ENCODE measurements at regions of chr10 and their contacts with region 1.

Region 1: DNA sequence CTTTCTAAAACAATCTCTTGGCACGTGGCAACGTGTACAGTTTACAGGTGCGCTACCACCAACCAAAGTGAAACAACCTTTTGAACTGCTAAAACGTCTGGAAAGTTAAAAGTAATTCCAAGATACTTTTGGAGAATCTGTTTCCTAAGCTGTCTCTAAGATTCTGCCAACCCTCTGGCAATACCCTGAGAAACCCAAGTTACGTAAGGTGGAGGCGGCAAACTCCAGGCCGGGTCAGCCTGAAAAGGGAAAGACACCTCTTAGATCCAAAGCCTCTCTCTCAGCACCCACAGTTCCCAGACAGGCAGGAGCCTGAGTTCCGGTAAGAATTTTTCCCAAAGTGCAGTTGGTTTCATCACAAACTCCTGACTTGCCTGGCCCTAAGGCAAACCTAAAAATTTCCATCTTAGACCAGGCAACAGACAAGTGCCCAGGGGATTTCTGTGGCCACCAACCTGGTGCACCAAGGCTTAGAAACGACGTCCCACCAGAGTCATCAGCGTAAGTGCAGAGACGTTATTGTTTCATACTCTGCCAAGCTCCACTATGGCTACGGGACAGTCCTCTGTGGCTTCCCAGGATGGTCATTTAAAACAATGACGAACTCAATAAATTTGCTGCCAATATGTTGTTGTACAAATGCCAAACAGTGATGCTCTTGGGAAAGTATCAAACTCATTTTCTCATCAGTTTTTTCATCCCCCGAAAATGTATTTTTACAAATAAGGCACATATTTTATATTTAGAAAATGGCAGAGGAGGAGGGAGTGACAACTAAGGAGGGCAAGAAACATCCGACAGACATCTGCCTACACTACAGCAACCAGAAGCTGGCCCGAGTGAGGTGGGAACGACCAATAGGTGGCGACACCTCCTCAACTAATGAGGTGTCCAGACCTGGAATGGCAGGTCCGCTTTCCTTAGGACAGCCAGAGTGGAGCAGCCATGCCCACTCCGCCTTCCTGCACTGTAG is 205.8 kb upstream of the FRMD4A start:
- DNase-seq: peak; percentile 56
- ATAC-seq: peak; percentile 71
- H3K4me3 ChIP-seq: no peak overlapping the region
- H3K27ac ChIP-seq: peak overlapping the region; percentile 24
- H3K4me1 ChIP-seq: peaks cover 59% of the 10 kb centered on the region
- H3K27me3 ChIP-seq: no peaks in the 10 kb centered on the region
- CTCF ChIP-seq: peak; percentile 87
- EP300 ChIP-seq: no peak
- POLR2A ChIP-seq: no peak
- RAD21 ChIP-seq: peak; percentile 82

Region 2: DNA sequence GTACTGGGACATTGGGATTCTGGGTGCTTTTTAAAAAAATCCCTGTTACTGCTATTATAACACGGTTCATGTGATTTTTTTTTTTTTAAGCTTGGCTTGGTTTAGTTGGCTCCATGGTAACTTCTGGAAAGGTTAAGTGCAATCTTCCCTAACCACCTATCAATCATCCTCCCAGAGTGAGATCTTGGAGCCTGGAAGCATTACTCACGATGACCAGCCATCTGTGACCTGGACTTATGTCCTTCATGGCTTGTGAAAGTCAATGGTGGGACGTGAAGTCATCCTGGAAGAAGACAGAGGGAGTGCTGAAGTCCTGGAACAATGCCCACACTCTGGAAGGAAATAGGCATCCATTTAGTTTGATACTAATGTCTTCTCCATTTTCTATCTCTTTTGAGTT is 70.3 kb before region 1 on chr10:
- CTCF ChIA-PET with region 1: no interaction called
- POLR2A ChIA-PET with region 1: no interaction called
- in situ Hi-C with region 1: no loop called
- intact Hi-C with region 1: no loop called
- DNase-seq: no peak
- ATAC-seq: no peak
- H3K4me3 ChIP-seq: no peak overlapping the region
- H3K27ac ChIP-seq: no peak overlapping the region
- H3K4me1 ChIP-seq: no peaks in the 10 kb centered on the region
- H3K27me3 ChIP-seq: peaks cover 0 to 16% of the 10 kb centered on the region in 2 experiments; a peak in 2 of 5 replicates
- CTCF ChIP-seq: no peak
- EP300 ChIP-seq: no peak
- POLR2A ChIP-seq: no peak
- RAD21 ChIP-seq: no peak

Region 3: DNA sequence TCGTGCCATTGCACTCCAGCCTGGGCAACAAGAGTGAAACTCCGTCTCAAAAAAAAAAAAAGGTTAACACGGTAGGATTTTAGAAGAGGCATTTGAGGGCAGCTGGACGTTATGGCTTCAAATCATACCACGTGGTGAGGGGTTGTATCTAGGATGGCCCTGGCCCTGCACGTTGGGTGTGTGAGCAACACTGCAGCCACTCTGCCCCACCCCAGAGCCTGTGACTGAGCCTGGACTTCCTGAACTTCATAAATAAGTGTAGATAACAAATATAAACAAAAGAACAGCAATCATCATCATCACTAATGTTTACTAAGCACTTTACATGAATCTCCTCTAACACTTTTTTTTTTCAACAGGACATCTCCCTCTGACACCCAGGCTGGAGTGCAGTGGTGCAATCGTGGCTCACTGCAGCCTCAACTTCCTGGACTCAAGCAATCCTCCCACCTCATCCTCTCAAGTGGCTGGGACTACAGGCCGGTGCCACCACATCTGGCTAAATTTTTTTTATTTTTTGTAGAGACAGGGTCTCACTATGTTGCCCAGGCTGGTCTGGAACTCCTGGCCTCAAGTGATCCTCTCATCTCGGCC is 36.3 kb before region 1 on chr10:
- CTCF ChIA-PET with region 1: no interaction called
- POLR2A ChIA-PET with region 1: no interaction called
- in situ Hi-C with region 1: no loop called
- intact Hi-C with region 1: loop called (anchors 1 kb)
- DNase-seq: no peak
- ATAC-seq: no peak
- H3K4me3 ChIP-seq: no peak overlapping the region
- H3K27ac ChIP-seq: no peak overlapping the region
- H3K4me1 ChIP-seq: no peaks in the 10 kb centered on the region
- H3K27me3 ChIP-seq: no peaks in the 10 kb centered on the region; a peak in 1 of 5 replicates
- CTCF ChIP-seq: no peak
- EP300 ChIP-seq: no peak
- POLR2A ChIP-seq: no peak
- RAD21 ChIP-seq: no peak

Region 4: GRCh38 chr10:14513123-14513522 is 23.4 kb before region 1 on chr10:
- CTCF ChIA-PET with region 1: no interaction called
- POLR2A ChIA-PET with region 1: no interaction called
- in situ Hi-C with region 1: no loop called
- intact Hi-C with region 1: no loop called
- DNase-seq: no peak
- ATAC-seq: no peak
- H3K4me3 ChIP-seq: no peak overlapping the region
- H3K27ac ChIP-seq: no peak overlapping the region
- H3K4me1 ChIP-seq: no peaks in the 10 kb centered on the region
- H3K27me3 ChIP-seq: no peaks in the 10 kb centered on the region
- CTCF ChIP-seq: no peak
- EP300 ChIP-seq: no peak
- POLR2A ChIP-seq: no peak
- RAD21 ChIP-seq: no peak

Region 5: GRCh38 chr10:14550471-14550981 is 14.0 kb after region 1 on chr10:
- CTCF ChIA-PET with region 1: interaction called, 6 read pairs
- POLR2A ChIA-PET with region 1: interaction called, 8 read pairs
- in situ Hi-C with region 1: no loop called
- intact Hi-C with region 1: loop called (anchors 2 kb)
- DNase-seq: peak; percentile 98
- ATAC-seq: peak; percentile 92
- H3K4me3 ChIP-seq: peak overlapping the region in 2 of 3 experiments; percentile 26; a peak in 1 of 6 replicates
- H3K27ac ChIP-seq: peak overlapping the region; percentile 71
- H3K4me1 ChIP-seq: peaks cover 61% of the 10 kb centered on the region
- H3K27me3 ChIP-seq: no peaks in the 10 kb centered on the region
- CTCF ChIP-seq: no peak
- EP300 ChIP-seq: peak; percentile 65 to 78; a peak in 3 of 4 replicates
- POLR2A ChIP-seq: no peak
- RAD21 ChIP-seq: 0 out of 2 replicates have a peak, but pooled peaks have one; percentile 28

Region 6: DNA sequence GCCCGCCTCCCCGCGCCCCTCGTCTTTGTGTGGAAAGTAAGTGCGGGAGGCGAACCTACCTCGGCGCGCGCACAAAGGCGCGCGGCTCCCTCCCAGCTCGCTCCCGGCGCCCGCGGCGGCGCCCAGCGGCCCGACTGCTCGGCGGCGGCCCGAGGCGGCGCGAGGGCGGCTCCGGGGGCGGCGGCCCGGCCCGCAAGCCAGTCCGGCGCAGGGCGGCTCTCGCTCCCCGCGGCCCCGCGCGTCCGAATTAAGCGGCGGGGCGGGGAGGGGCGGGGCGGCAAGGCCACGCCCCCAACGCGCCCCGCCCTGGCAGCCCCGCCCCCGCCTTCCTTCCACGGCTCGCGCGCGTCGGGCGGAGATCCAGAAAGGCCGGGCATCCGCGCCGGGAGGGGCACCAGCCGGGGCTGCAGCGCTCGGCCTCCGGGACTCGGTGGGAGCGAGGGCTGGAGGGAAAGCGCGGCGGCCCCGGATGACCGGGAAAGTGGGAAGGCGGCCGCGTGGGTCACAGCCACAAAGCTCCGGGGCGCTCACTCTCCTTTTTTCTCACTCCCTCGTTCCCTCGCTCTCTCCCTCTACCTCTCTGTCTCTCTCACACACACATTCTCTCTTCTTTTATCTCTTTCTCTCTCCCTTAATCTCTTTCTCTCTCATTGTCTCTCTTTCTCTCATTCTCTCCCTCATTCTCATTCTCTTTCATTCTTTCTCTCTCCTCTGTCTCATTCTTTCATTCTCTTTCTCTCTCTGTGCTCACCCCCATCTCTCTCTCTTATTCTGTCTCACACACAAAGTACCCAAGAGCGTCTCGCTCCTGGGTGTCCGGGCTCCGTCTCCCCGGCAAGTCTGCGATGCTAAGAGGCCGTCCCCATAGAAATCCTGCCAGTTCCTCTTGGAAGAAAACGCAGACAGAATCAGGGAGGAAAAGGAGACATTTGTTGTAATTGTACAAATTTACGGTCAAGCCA is 67.9 kb after region 1 on chr10:
- CTCF ChIA-PET with region 1: no interaction called
- POLR2A ChIA-PET with region 1: no interaction called
- in situ Hi-C with region 1: no loop called
- intact Hi-C with region 1: loop called (anchors 5 kb)
- DNase-seq: no peak
- ATAC-seq: peak; percentile 79
- H3K4me3 ChIP-seq: peak overlapping the region; percentile 38 to 91 (median 74); a peak in 5 of 6 replicates
- H3K27ac ChIP-seq: no peak overlapping the region
- H3K4me1 ChIP-seq: peaks cover 71% of the 10 kb centered on the region
- H3K27me3 ChIP-seq: no peaks in the 10 kb centered on the region
- CTCF ChIP-seq: no peak
- EP300 ChIP-seq: no peak
- POLR2A ChIP-seq: peak in 1 of 2 experiments; percentile 73; a peak in 2 of 4 replicates
- RAD21 ChIP-seq: no peak

Region 7: DNA sequence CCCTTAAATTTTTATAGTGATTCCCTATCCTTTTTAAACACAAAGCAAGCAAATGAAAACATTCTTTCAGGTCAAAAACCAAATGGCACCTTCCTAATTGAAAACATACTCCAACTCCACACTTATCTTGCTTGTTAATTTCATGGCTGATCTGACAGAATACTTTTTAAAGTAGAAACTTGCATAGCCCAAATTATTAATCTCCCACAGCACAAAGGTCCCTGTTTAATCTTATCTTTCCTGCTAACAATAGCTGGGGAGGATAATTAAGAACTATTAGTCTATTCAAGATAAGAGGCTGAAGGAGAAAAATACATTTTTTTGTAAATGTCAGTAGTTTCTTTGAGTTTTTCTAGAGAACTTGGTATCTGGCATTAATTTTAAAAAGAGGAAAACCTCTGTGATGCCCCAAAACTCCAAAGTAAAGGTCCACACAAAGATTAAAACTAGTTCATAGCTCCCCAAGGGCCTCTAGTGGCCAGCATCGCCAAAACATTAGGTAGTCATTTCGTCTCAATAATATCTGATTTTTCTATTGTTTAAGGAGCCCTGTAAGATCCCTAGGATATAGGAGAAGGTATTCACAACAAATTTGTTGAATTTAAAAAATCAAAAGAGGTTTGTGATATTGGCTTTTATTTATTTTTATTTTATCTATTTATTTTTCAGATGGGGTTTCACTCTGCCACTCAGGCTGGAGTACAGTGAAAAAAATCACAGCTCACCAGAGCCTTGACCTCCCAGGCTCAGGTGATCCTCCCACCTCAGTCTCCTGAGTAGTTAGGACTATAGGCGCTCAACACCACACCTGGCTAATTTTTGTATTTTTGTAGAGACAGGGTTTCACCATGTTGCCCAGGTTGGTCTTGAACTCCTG is 286.6 kb after region 1 on chr10:
- CTCF ChIA-PET with region 1: interaction called, 13 read pairs
- POLR2A ChIA-PET with region 1: no interaction called
- in situ Hi-C with region 1: no loop called
- intact Hi-C with region 1: loop called (anchors 1 kb)
- DNase-seq: peak; percentile 12
- ATAC-seq: peak; percentile 44; the same call in 1 of the 3 replicates
- H3K4me3 ChIP-seq: no peak overlapping the region
- H3K27ac ChIP-seq: no peak overlapping the region
- H3K4me1 ChIP-seq: no peaks in the 10 kb centered on the region
- H3K27me3 ChIP-seq: peaks cover 0 to 1% of the 10 kb centered on the region in 2 experiments; a peak in 1 of 5 replicates
- CTCF ChIP-seq: peak; percentile 55
- EP300 ChIP-seq: no peak
- POLR2A ChIP-seq: no peak
- RAD21 ChIP-seq: 0 out of 2 replicates have a peak, but pooled peaks have one; percentile 44

Region 8: GRCh38 chr10:14837757-14838581 is 301.4 kb after region 1 on chr10 and contains the starts of genes CDNF, HSPA14 and MSANTD7:
- CTCF ChIA-PET with region 1: no interaction called
- POLR2A ChIA-PET with region 1: interaction called, 4 read pairs
- in situ Hi-C with region 1: no loop called
- intact Hi-C with region 1: loop called (anchors 5 kb)
- DNase-seq: peak; percentile 98
- ATAC-seq: peak; percentile 96
- H3K4me3 ChIP-seq: peak within 1 kb of the TSS; percentile 79 to 98 (median 93)
- H3K27ac ChIP-seq: peak within 1 kb of the TSS; percentile 83
- H3K4me1 ChIP-seq: peaks cover 17% of the 10 kb centered on the region
- H3K27me3 ChIP-seq: no peaks in the 10 kb centered on the region; a peak in 1 of 5 replicates
- CTCF ChIP-seq: 0 out of 2 replicates have a peak, but pooled peaks have one; percentile 13
- EP300 ChIP-seq: peak; percentile 18 to 19; a peak in 1 of 4 replicates
- POLR2A ChIP-seq: peak; percentile 76 to 83
- RAD21 ChIP-seq: peak; percentile 58
- total RNA-seq, gene CDNF: 0.33 and 0.38 TPM in 2 replicates
- total RNA-seq, gene HSPA14: 29.8 and 42.9 TPM in 2 replicates
- total RNA-seq, gene MSANTD7: 16.7 and 22.8 TPM in 2 replicates

Region 9: DNA sequence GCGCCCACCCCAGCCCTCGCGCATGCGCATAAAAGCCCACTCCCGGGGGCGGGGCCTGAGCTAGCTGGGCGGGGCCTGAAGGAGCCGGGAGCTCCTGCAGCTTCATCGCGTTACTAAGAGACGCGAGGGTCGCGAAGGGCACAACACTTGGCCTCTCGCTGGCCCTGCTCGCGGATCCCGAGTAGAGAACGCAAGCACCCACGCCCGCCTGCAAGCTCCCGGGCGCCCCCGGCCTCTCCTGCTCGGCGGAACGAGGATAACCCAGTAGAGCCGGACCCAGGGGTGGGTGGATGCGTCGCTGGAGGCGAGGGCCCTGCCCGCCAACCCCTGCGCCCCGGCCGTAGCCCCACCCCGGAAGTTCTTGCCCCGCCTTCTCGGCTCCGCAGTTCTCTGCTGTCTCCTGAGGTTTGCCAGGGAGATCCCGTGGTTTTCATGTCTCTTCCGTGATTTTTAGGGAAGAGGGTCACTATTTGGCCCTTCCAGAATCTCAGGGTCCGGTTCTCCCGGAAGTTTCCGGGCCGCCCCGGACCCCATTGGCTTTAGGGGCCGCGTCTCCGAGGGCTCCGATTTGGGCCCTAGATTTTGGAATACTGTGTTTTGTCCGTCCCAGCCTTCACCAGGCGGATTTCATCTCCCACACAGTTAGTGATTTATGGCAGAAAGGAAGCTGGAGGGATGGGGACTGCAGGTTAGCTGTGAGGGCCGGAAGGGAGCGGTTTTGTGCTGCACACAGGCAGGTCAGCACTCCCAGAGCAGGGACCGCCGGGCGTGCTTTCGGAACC is 422.9 kb after region 1 on chr10 and contains the start of gene MEIG1:
- CTCF ChIA-PET with region 1: no interaction called
- POLR2A ChIA-PET with region 1: no interaction called
- in situ Hi-C with region 1: no loop called
- intact Hi-C with region 1: loop called (anchors 10 kb)
- DNase-seq: peak; percentile 92
- ATAC-seq: peak; percentile 96
- H3K4me3 ChIP-seq: peak within 1 kb of the TSS; percentile 67 to 80 (median 79)
- H3K27ac ChIP-seq: peak within 1 kb of the TSS; percentile 96
- H3K4me1 ChIP-seq: peaks cover 10% of the 10 kb centered on the region
- H3K27me3 ChIP-seq: no peaks in the 10 kb centered on the region
- CTCF ChIP-seq: no peak
- EP300 ChIP-seq: no peak
- POLR2A ChIP-seq: peak; percentile 51 to 70
- RAD21 ChIP-seq: peak; percentile 19; the same call in 1 of the 2 replicates
- total RNA-seq, gene MEIG1: not detected in 2 replicates